ENCODE measurements at regions of chr18 and their contacts with region 1.

Region 1: DNA sequence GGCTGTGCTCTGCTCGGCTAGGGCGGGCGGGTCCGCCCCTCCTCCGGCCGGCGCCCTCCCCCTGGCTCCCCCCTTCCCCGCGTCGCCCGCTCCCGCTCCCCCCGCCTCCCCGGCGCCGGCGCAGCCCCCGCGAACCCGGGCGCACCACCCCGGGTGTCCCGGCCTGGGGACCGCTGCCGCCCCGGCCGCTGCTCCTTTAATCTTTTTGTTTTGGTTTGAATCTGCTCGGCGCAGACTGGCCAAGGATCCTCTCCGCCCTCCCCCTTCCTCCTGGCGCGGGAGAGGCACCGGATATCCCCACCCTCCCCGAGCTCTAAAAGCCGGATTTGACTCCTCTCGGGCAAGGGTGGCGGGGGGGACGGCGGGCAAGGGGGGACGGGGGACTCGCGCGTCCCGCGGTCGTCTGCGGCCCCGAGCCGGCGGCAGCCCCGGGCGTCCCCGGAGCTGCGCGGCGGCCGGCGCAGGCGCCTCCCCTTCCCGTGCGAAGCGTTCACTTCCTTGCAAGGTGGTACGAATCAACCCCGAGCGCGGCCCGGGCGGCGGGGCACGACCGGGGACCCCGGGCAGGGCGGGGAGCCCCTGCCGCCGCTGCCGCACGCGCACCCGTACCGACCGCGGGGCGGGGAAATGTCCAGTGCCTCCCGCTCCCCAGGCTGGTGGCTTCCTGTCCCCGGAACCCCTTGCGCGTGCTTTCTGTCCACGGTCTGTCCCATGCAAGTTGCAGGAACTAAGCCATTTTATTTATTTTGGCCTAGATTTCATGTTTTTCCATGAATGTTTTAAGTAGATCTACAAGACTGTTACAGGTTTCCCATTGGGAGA is at the start of gene PTGR3:
- DNase-seq: peak; percentile 92 to 94 (median 93)
- ATAC-seq: peak; percentile 65 to 84 (median 75)
- H3K4me3 ChIP-seq: peak within 1 kb of the TSS; percentile 61 to 99 (median 96)
- H3K27ac ChIP-seq: peak within 1 kb of the TSS; percentile 96 to 100 (median 99)
- H3K4me1 ChIP-seq: peaks cover 7 to 63% (median 53%) of the 10 kb centered on the region in 12 donors
- H3K27me3 ChIP-seq: no peaks in the 10 kb centered on the region
- CTCF ChIP-seq: no peak
- POLR2A ChIP-seq: peak in 1 of 2 donors; percentile 56
- total RNA-seq, gene PTGR3: 35.3 to 58.2 (median 49.4) TPM

Region 2: DNA sequence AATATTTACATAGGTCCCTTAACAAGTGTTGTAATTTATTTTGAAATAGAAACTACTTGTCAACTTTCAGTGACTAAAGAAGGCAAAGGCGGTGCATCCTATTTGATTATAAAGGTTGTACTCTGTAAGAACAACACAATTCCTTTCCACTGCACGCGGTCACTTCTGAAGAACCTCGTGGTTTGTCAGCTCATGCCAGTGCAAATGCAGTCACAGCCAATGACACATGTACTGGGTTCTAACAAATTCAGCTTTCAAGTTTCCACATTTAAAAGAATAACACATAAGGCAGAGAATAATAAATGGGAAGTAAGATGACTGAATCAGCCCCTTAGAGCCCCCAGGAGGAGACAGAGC is 957.3 kb before region 1 on chr18:
- intact Hi-C with region 1: no loop called
- DNase-seq: no peak
- ATAC-seq: no peak
- H3K4me3 ChIP-seq: no peak overlapping the region
- H3K27ac ChIP-seq: peak overlapping the region in 2 of 12 donors; percentile 72 to 77
- H3K4me1 ChIP-seq: peaks cover 2 to 38% (median 27%) of the 10 kb centered on the region in 12 donors
- H3K27me3 ChIP-seq: no peaks in the 10 kb centered on the region
- CTCF ChIP-seq: no peak
- POLR2A ChIP-seq: no peak

Region 3: DNA sequence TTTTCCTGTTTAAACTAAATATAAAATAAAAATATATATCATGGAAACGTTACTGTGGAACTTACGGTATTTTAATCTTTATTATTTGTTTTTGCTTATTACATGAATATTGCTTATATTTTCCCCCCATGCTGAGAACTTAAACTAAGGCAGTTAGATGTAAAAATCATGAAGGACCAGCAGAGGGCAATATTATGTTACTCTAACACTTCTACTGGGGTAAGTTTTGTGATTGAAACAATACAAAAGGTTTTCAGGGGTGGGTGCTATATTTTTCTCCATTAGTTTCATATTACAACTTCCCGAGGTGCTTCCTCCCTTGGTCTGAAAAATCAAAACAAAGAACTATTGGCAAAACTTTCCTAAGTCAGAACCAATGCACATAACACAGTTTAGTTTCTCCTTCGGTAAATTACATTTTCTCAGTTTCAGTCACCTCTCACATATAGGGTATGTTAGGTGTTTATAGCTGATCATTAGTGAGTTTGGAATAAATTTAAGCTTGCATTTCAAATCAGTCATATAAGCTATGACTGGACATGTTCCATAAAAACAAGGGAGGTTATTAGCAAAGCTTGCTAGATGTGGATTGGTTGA is 556.9 kb before region 1 on chr18:
- intact Hi-C with region 1: loop called in 2 of 10 experiments (anchors 10 kb)
- DNase-seq: no peak
- ATAC-seq: no peak
- H3K4me3 ChIP-seq: no peak overlapping the region
- H3K27ac ChIP-seq: no peak overlapping the region
- H3K4me1 ChIP-seq: no peaks in the 10 kb centered on the region
- H3K27me3 ChIP-seq: no peaks in the 10 kb centered on the region
- CTCF ChIP-seq: peak; percentile 48 to 72 (median 61)
- POLR2A ChIP-seq: no peak

Region 4: GRCh38 chr18:75052475-75052874 is 156.9 kb before region 1 on chr18:
- intact Hi-C with region 1: loop called in 5 of 10 experiments (anchors 5 to 10 kb)
- DNase-seq: peak in 2 of 5 donors; percentile 49 to 56
- ATAC-seq: peak; percentile 48 to 69 (median 62)
- H3K4me3 ChIP-seq: no peak overlapping the region
- H3K27ac ChIP-seq: peak overlapping the region in 11 of 12 donors; percentile 41 to 75 (median 60)
- H3K4me1 ChIP-seq: peaks cover 0 to 47% (median 7%) of the 10 kb centered on the region in 12 donors
- H3K27me3 ChIP-seq: no peaks in the 10 kb centered on the region
- CTCF ChIP-seq: no peak
- POLR2A ChIP-seq: no peak

Region 5: DNA sequence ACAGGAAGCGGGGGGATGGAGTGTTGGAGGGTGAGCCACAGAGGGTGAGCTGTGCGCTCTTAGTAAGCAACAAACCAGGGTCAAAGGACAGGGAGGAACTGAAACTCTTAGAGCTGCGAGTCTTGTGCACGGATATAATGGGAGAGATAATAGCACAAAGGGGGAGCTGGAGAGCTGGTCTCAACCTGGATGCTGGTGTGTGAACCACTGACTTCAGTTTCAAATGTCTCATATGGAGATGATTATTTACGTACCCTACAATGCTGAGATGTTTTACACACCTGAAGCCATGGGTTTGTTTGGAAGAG is 36.3 kb before region 1 on chr18:
- intact Hi-C with region 1: loop called in 5 of 10 experiments (anchors 2 to 5 kb)
- DNase-seq: no peak
- ATAC-seq: no peak
- H3K4me3 ChIP-seq: no peak overlapping the region
- H3K27ac ChIP-seq: no peak overlapping the region
- H3K4me1 ChIP-seq: peaks cover 0 to 21% (median 7%) of the 10 kb centered on the region in 12 donors
- H3K27me3 ChIP-seq: no peaks in the 10 kb centered on the region
- CTCF ChIP-seq: peak in 6 of 12 donors; percentile 10 to 30 (median 22)
- POLR2A ChIP-seq: no peak

Region 6: GRCh38 chr18:75247611-75248421 is 38.5 kb after region 1 on chr18:
- intact Hi-C with region 1: loop called in 6 of 10 experiments (anchors 2 to 5 kb)
- DNase-seq: no peak
- ATAC-seq: peak in 2 of 4 donors; percentile 59 to 67
- H3K4me3 ChIP-seq: peak overlapping the region; percentile 12 to 60 (median 42)
- H3K27ac ChIP-seq: peak overlapping the region; percentile 43 to 90 (median 76)
- H3K4me1 ChIP-seq: peaks cover 0 to 70% (median 37%) of the 10 kb centered on the region in 12 donors
- H3K27me3 ChIP-seq: no peaks in the 10 kb centered on the region
- CTCF ChIP-seq: no peak
- POLR2A ChIP-seq: no peak

Region 7: DNA sequence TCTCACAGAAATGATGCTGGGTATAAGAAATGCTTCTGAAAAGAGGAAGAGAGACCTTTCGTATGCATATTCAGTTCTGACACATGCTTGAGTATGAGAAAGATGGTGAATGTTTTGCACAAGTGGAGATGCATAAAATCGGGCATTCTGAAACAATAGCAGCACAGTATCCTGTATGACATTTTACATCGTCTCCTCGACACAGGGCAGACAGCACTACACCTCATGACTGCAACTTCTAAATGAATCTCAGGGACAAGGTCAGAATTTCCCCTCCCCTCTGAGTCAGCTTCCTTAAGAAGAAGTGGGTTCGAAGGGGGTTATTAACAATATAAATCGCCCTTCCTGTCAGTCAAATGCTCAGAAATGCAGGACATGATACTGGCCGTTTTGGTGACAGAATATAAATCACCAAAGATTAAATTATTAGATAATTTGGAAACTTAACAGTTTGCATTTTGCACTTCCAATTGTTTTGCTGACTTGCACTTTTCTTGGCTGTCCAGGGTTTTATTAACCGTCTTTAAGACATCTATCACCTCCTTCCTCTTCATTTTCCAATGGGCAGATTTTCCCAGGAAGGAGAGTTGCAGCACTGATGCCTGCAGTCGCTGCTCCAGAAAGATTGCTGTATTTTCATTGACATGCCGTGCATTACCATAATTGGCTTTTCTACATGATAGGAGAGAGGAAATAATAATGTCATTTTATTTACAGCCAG is 58.5 kb after region 1 on chr18:
- intact Hi-C with region 1: loop called in 1 of 10 experiments (anchors 5 kb)
- DNase-seq: no peak
- ATAC-seq: peak in 2 of 4 donors; percentile 29 to 41
- H3K4me3 ChIP-seq: no peak overlapping the region
- H3K27ac ChIP-seq: peak overlapping the region in 1 of 12 donors; percentile 6
- H3K4me1 ChIP-seq: peaks cover 0 to 43% (median 16%) of the 10 kb centered on the region in 12 donors
- H3K27me3 ChIP-seq: no peaks in the 10 kb centered on the region
- CTCF ChIP-seq: no peak
- POLR2A ChIP-seq: no peak

Region 8: DNA sequence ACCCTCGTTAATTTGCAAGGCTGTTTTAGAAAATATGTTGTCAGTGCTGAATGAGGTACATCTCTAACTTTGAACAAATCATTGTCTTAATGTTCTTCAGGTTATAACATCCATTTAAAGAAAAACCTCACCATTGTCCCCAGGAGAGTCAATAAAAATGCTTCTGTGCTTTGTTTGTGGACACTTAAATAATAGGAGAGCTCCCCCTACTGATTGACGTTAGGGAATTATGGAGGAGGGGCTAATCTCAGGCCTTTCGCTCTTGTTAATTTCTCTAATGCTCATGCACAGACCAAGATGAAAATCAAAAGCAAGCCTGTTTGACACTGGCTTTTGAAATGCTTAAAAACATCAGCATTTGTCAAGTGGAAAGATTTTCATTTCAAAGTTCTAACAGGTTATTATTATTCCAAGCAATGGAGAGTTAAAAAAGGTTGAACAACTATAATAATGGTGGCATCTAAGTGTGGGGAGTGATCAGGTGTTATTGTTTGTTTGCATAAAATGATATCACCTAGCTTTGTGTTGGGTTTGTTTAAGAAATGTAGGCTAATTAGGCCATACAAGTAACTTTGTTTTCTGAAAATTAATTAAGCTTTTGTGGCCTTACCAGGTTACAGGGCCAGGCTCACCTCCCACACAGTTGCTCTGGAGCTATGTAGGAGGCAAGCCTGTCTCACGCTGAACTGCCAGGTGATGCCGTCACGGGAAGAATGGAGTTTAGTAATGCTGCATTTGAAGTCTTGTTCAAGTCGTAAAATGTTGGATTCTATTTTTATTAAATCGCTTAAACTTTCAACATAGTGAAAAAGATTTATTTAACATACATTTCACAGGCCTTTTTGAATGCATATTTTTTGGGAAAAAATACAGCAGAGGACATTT is 269.9 kb after region 1 on chr18:
- intact Hi-C with region 1: loop called in 5 of 10 experiments (anchors 5 to 10 kb)
- DNase-seq: no peak
- ATAC-seq: peak in 3 of 4 donors; percentile 79 to 86 (median 84)
- H3K4me3 ChIP-seq: no peak overlapping the region
- H3K27ac ChIP-seq: no peak overlapping the region
- H3K4me1 ChIP-seq: no peaks in the 10 kb centered on the region
- H3K27me3 ChIP-seq: no peaks in the 10 kb centered on the region
- CTCF ChIP-seq: peak; percentile 60 to 84 (median 70)
- POLR2A ChIP-seq: no peak